ENCODE measurements at regions of chr2 and their contacts with region 1.

Region 1: DNA sequence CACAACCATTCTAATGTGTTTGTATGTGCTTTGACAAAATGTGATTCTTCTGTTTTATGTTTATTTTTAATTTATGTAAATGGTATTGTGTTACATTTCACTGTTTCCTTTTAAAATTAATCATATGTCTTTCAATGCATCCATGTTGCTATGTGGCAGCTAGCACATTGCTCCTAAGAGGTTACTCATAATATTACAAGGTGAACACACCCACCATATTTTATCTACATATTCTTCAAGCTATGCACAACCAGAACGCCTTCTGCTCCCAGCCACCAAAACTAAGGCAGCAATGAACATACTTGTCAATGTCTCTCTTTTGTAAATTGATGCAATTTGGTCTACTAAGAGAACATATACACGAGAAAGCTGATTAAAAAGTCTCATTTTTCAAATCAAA is 160.6 kb upstream of the OSR1 start:
- DNase-seq: no peak
- H3K4me3 Mint-ChIP-seq: no peak overlapping the region
- H3K27ac Mint-ChIP-seq: no peak overlapping the region
- H3K4me1 Mint-ChIP-seq: no peaks in the 10 kb centered on the region
- H3K27me3 Mint-ChIP-seq: no peaks in the 10 kb centered on the region
- CTCF ChIP-seq: no peak

Region 2: DNA sequence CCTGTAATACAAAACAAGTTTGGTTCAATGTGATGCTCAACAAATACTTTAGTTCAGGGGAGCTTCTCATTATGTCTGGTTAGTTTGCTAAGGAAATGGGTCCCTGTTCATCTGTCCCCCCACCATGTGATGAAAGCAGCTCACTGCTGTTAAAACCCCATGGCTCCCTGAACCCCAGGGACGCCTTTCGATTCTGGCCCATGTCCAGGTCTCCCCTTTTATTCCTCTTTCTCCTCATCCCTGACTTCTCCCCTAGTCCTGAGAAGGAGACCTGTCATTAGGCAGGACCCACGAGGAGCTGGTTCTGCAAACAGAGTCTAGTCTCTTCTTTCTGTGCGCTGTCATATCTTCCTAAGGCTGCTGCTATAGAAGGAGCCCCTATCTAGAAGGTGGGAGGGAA is 52.7 kb after region 1 on chr2:
- CTCF ChIA-PET with region 1: no interaction called
- POLR2A ChIA-PET with region 1: interaction called, 3 read pairs
- intact Hi-C with region 1: loop called (anchors 2 kb)
- DNase-seq: no peak
- H3K4me3 Mint-ChIP-seq: no peak overlapping the region
- H3K27ac Mint-ChIP-seq: no peak overlapping the region
- H3K4me1 Mint-ChIP-seq: peaks cover 9% of the 10 kb centered on the region
- H3K27me3 Mint-ChIP-seq: no peaks in the 10 kb centered on the region
- CTCF ChIP-seq: no peak